H1 (cell line): ENCODE measurements at regions of chr21 and their contacts with region 1.

Region 1: GRCh38 chr21:23574932-23575331 is 2032.3 kb downstream of the MRPL39 start:
- DNase-seq: peak in 1 of 2 experiments; percentile 9
- H3K4me3 ChIP-seq: no peak overlapping the region
- H3K27ac ChIP-seq: no peak overlapping the region
- H3K4me1 ChIP-seq: no peaks in the 10 kb centered on the region
- H3K27me3 ChIP-seq: no peaks in the 10 kb centered on the region
- CTCF ChIP-seq: peak; percentile 59 to 93 (median 77)
- EP300 ChIP-seq: no peak
- POLR2A ChIP-seq: no peak
- RAD21 ChIP-seq: peak; percentile 42 to 56

Region 2: GRCh38 chr21:23585419-23585818 is 10.5 kb after region 1 on chr21:
- CTCF ChIA-PET with region 1: interaction called, 11 read pairs
- POLR2A ChIA-PET with region 1: no interaction called
- DNase-seq: no peak
- H3K4me3 ChIP-seq: no peak overlapping the region
- H3K27ac ChIP-seq: no peak overlapping the region
- H3K4me1 ChIP-seq: no peaks in the 10 kb centered on the region
- H3K27me3 ChIP-seq: no peaks in the 10 kb centered on the region
- CTCF ChIP-seq: no peak
- EP300 ChIP-seq: no peak
- POLR2A ChIP-seq: no peak
- RAD21 ChIP-seq: no peak